Aorta (tissue), 5 donors: ENCODE measurements at regions of chr12 and their contacts with region 1.

Region 1: DNA sequence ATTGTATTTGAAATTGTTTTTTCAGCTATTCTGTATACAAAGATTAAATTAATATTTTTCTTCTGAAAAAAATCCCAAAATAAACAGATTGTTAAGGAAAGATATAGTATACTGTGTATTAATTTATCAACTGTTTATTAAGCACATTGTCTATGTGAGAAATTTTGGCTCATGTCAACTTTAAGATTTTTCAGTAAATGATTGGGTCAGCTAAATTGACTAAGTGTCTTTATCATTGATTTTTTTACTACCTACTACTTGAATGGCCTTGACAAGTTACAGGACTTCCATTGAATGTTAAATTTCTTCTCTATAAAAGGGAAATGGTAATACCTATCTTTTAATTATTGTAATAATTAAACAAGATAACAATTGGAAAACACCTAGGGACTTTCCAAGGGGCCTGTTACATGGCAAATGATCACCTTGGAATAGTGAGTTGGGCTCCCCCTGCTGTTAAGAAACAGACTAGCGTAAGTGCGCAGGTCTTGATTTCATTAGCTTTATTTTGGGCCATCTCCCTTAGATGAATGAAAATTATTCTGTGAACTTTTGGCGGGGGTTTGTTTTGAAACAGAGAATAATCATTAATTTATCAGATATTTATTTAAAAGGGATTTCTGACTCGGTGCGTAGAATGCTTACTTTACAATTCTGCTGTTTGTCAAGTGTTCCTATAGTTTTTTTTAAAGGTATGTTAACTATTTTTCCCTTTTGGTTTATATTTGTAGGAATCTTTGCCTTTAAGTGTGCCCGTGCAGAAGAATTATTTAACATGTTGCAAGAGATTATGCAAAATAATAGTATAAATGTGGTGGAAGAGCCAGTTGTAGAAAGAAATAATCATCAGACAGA is 14.5 kb upstream of the CCT2 start:
- DNase-seq: peak in 1 of 2 donors; percentile 49
- ATAC-seq: no peak
- H3K4me3 ChIP-seq: no peak overlapping the region
- H3K27ac ChIP-seq: no peak overlapping the region
- H3K4me1 ChIP-seq: no peaks in the 10 kb centered on the region
- H3K27me3 ChIP-seq: no peaks in the 10 kb centered on the region

Region 2: GRCh38 chr12:69388371-69388770 is 182.4 kb before region 1 on chr12:
- intact Hi-C with region 1: loop called (anchors 1 to 5 kb)
- DNase-seq: no peak
- ATAC-seq: peak; percentile 79
- H3K4me3 ChIP-seq: no peak overlapping the region
- H3K27ac ChIP-seq: no peak overlapping the region
- H3K4me1 ChIP-seq: no peaks in the 10 kb centered on the region
- H3K27me3 ChIP-seq: no peaks in the 10 kb centered on the region

Region 3: DNA sequence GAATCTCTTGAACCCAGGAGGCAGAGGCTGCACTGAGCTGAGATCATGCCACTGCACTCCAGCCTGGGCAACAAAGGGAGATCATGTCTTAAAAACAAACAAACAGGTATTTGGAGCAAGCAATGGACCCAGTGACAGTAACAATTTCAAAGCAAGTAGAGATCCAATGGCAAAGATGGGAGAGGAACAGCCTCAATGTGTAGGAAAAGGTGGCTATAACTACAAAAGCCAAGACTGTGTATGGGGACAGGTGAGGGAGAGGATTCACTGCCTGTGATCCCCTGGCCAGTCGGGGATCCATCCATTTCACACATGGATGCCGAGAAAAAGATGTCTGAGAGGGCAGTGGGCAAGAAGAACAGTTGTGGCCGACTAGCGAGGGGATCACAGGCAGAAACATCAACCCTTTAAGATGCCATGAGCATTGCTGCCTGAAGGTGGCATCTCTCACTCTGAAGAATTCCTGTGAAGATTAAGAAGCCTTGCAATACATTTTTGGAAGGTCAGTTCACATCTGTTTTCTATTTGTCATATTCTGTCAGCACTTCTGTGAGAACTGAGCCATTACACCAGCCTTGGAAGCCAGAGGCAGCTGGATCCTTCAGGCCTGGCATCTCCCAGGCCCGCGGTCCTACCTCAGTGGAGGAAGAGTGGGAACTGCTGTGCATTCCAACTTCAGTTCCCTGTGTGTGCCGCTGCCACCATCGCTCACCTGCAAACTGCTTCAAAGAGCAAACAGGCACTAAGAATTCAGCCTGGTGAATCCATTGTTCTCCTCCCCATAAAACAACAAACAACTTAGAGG is 155.1 kb before region 1 on chr12:
- intact Hi-C with region 1: loop called in 1 of 2 experiments (anchors 10 kb)
- DNase-seq: peak; percentile 45 to 71
- ATAC-seq: peak; percentile 87
- H3K4me3 ChIP-seq: no peak overlapping the region
- H3K27ac ChIP-seq: no peak overlapping the region
- H3K4me1 ChIP-seq: no peaks in the 10 kb centered on the region
- H3K27me3 ChIP-seq: no peaks in the 10 kb centered on the region

Region 4: GRCh38 chr12:69470189-69471075 is 100.3 kb before region 1 on chr12 and contains the start of gene FRS2:
- intact Hi-C with region 1: loop called (anchors 2 to 5 kb)
- DNase-seq: peak; percentile 95 to 97
- ATAC-seq: peak; percentile 97
- H3K4me3 ChIP-seq: peak within 1 kb of the TSS; percentile 94 to 97
- H3K27ac ChIP-seq: peak within 1 kb of the TSS; percentile 88 to 99
- H3K4me1 ChIP-seq: peaks cover 4 to 14% of the 10 kb centered on the region in 2 donors
- H3K27me3 ChIP-seq: no peaks in the 10 kb centered on the region
- total RNA-seq, gene FRS2: 38.3 to 44.5 TPM